Activated T-helper 1 cell treated with anti-CD3 and anti-CD28 coated beads, Interleukin-12 subunit alpha, Interleukin-12 subunit beta, Interleukin-2, Interleukin-4 antibody, amounts not matched to agents 30 ng/mL and 10 ng/mL and 1 ng/mL, durations not matched to agents 14 hours and 24 hours and 36 hours (primary cell): ENCODE measurements at regions of chr19 and their contacts with region 1.

Region 1: GRCh38 chr19:53867225-53868090 is at the start of gene MYADM:
- DNase-seq: peak; percentile 100
- H3K4me3 Mint-ChIP-seq: peak within 1 kb of the TSS; percentile 94
- H3K27ac Mint-ChIP-seq: peak within 1 kb of the TSS; percentile 96
- H3K4me1 Mint-ChIP-seq: peaks cover 37% of the 10 kb centered on the region
- H3K27me3 Mint-ChIP-seq: peaks cover 3% of the 10 kb centered on the region
- total RNA-seq, gene MYADM: 58.8 and 63.1 TPM in 2 replicates

Region 2: DNA sequence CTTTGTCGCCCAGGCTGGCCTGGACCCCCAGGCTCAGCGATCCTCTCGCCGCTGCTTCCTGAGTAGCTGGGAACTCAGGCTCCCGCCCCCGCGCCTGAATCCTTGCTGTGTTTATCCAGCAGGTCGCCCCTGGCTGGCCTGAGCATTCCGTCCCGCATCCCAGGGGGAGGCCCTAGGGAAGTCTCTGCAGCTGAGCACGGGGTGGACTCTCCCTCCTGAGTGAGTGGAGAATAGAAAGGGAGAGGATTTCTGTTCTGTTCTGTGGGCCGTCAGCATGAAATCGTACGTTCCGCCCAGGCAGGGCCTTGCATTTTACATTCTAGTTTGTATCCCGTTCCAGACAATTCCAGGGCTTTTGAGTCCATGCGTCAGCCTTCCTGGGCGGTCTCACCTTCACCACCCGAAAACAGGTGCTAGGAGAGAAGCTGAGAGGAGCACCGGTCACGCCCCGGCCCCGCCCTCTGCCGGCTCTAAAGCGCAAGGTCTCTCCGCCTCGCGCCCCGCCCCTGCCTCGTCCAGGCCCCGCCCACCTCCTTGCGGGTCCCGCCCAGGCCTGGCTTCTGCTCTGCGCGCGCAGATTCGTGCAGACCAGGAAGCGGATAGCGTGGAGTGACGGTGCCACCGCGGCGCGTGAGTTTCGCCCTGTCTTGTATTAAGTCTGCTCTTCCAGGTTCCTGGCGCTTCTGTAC is 435.9 kb before region 1 on chr19 and contains the start of gene ZNF761:
- intact Hi-C with region 1: loop called (anchors 2 kb)
- DNase-seq: peak; percentile 96
- H3K4me3 Mint-ChIP-seq: peak within 1 kb of the TSS; percentile 88
- H3K27ac Mint-ChIP-seq: peak within 1 kb of the TSS; percentile 94
- H3K4me1 Mint-ChIP-seq: peaks cover 25% of the 10 kb centered on the region
- H3K27me3 Mint-ChIP-seq: no peaks in the 10 kb centered on the region
- total RNA-seq, gene ZNF761: 9.9 and 12.3 TPM in 2 replicates

Region 3: GRCh38 chr19:53879140-53880081 is 12.0 kb after region 1 on chr19:
- intact Hi-C with region 1: loop called (anchors 1 kb)
- DNase-seq: peak; percentile 84
- H3K4me3 Mint-ChIP-seq: no peak overlapping the region
- H3K27ac Mint-ChIP-seq: no peak overlapping the region
- H3K4me1 Mint-ChIP-seq: peaks cover 43% of the 10 kb centered on the region
- H3K27me3 Mint-ChIP-seq: peaks cover 13% of the 10 kb centered on the region

Region 4: GRCh38 chr19:53906211-53907192 is 39.0 kb after region 1 on chr19:
- intact Hi-C with region 1: no loop called
- DNase-seq: peak; percentile 62
- H3K4me3 Mint-ChIP-seq: peak overlapping the region; percentile 45
- H3K27ac Mint-ChIP-seq: no peak overlapping the region
- H3K4me1 Mint-ChIP-seq: peaks cover 23% of the 10 kb centered on the region
- H3K27me3 Mint-ChIP-seq: peaks cover 48% of the 10 kb centered on the region

Region 5: GRCh38 chr19:53927739-53928138 is 60.3 kb after region 1 on chr19:
- intact Hi-C with region 1: no loop called
- DNase-seq: peak; percentile 14
- H3K4me3 Mint-ChIP-seq: no peak overlapping the region
- H3K27ac Mint-ChIP-seq: no peak overlapping the region
- H3K4me1 Mint-ChIP-seq: no peaks in the 10 kb centered on the region
- H3K27me3 Mint-ChIP-seq: no peaks in the 10 kb centered on the region

Region 6: GRCh38 chr19:54077334-54077733 is 209.9 kb after region 1 on chr19:
- intact Hi-C with region 1: no loop called
- DNase-seq: no peak
- H3K4me3 Mint-ChIP-seq: no peak overlapping the region
- H3K27ac Mint-ChIP-seq: no peak overlapping the region
- H3K4me1 Mint-ChIP-seq: no peaks in the 10 kb centered on the region
- H3K27me3 Mint-ChIP-seq: no peaks in the 10 kb centered on the region

Region 7: GRCh38 chr19:54115109-54116063 is 247.9 kb after region 1 on chr19 and contains the starts of genes PRPF31 and TFPT:
- intact Hi-C with region 1: loop called (anchors 1 kb)
- DNase-seq: peak; percentile 93
- H3K4me3 Mint-ChIP-seq: peak within 1 kb of the TSS; percentile 94
- H3K27ac Mint-ChIP-seq: peak within 1 kb of the TSS; percentile 91
- H3K4me1 Mint-ChIP-seq: peaks cover 32% of the 10 kb centered on the region
- H3K27me3 Mint-ChIP-seq: no peaks in the 10 kb centered on the region
- total RNA-seq, gene PRPF31: 110 and 118 TPM in 2 replicates
- total RNA-seq, gene TFPT: 31.1 and 33.4 TPM in 2 replicates

Region 8: GRCh38 chr19:54159352-54160181 is 292.1 kb after region 1 on chr19 and contains the start of gene LENG1:
- intact Hi-C with region 1: loop called (anchors 5 kb)
- DNase-seq: peak; percentile 99
- H3K4me3 Mint-ChIP-seq: peak within 1 kb of the TSS; percentile 95
- H3K27ac Mint-ChIP-seq: peak within 1 kb of the TSS; percentile 99
- H3K4me1 Mint-ChIP-seq: peaks cover 56% of the 10 kb centered on the region
- H3K27me3 Mint-ChIP-seq: peaks cover 4% of the 10 kb centered on the region
- total RNA-seq, gene LENG1: 5.8 and 6.6 TPM in 2 replicates

Region 9: DNA sequence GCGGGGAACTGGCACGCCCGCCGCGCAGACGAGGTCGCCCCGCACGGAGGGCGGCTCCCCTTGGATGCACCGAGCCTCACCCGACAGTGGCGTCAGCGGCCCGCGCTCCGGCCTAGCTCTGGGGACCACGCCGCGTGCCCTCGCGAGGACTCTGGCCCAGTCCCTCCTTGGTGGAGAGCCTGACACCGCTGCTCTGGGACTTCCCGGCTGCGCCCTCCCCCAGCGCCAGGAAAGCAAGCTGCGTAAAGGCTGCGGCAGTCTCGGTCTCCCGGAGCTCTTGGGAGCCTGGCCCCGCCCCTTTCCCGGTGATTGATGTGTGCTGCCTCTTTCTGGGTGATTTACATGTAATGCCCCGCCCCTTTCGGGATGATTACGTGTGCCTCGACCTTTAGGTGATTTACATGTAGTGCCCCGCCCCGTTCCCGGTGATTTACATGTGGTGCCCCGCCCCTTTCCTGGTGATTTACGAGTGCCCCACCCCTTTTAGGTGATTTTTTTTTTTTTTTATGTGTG is 596.1 kb after region 1 on chr19 and contains the start of gene LENG9:
- intact Hi-C with region 1: loop called (anchors 2 kb)
- DNase-seq: peak; percentile 96
- H3K4me3 Mint-ChIP-seq: peak within 1 kb of the TSS; percentile 84
- H3K27ac Mint-ChIP-seq: peak within 1 kb of the TSS; percentile 89
- H3K4me1 Mint-ChIP-seq: peaks cover 25% of the 10 kb centered on the region
- H3K27me3 Mint-ChIP-seq: peaks cover 21% of the 10 kb centered on the region
- total RNA-seq, gene LENG9: 8.4 and 11.5 TPM in 2 replicates